GM12878 (cell line): ENCODE measurements at regions of chr19 and their contacts with region 1.

Region 1: GRCh38 chr19:35710784-35711723 is 6.7 kb downstream of the ZBTB32 start:
- DNase-seq: peak; percentile 94
- ATAC-seq: peak; percentile 56
- H3K4me3 ChIP-seq: peak overlapping the region; percentile 43
- H3K27ac ChIP-seq: peak overlapping the region; percentile 95
- H3K4me1 ChIP-seq: peaks cover 43% of the 10 kb centered on the region
- H3K27me3 ChIP-seq: no peaks in the 10 kb centered on the region
- CTCF ChIP-seq: no peak
- EP300 ChIP-seq: peak; percentile 70 to 92
- POLR2A ChIP-seq: peak; percentile 69
- RAD21 ChIP-seq: no peak

Region 2: GRCh38 chr19:35666246-35666913 is 44.7 kb before region 1 on chr19 and contains the start of gene UPK1A:
- CTCF ChIA-PET with region 1: no interaction called
- POLR2A ChIA-PET with region 1: no interaction called
- RAD21 ChIA-PET with region 1: no interaction called
- SMC1A ChIA-PET with region 1: no interaction called
- in situ Hi-C with region 1: no loop called
- intact Hi-C with region 1: no loop called
- DNase-seq: no peak
- ATAC-seq: no peak
- H3K4me3 ChIP-seq: no peak within 1 kb of the TSS
- H3K27ac ChIP-seq: no peak within 1 kb of the TSS
- H3K4me1 ChIP-seq: no peaks in the 10 kb centered on the region
- H3K27me3 ChIP-seq: no peaks in the 10 kb centered on the region
- CTCF ChIP-seq: no peak
- EP300 ChIP-seq: no peak
- POLR2A ChIP-seq: peak; percentile 15; the same call in 1 of the 2 replicates
- RAD21 ChIP-seq: no peak
- polyA plus RNA-seq, gene UPK1A: 0.26 TPM in 1 of 2 experiments, not detected in the other

Region 3: DNA sequence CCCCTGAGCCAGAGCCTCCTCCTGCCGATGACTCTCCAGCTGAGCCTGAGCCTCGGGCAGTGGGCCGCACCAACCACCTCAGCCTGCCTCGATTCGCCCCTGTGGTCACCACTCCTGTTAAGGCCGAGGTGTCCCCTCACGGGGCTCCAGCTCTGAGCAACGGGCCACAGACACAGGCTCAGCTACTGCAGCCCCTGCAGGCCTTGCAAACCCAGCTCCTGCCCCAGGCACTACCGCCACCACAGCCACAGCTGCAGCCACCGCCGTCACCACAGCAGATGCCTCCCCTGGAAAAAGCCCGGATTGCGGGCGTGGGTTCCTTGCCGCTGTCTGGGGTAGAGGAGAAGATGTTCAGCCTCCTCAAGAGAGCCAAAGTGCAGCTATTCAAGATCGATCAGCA is 10.3 kb after region 1 on chr19:
- CTCF ChIA-PET with region 1: no interaction called
- POLR2A ChIA-PET with region 1: no interaction called
- RAD21 ChIA-PET with region 1: no interaction called
- SMC1A ChIA-PET with region 1: no interaction called
- in situ Hi-C with region 1: no loop called
- intact Hi-C with region 1: no loop called
- DNase-seq: no peak
- ATAC-seq: no peak
- H3K4me3 ChIP-seq: no peak overlapping the region
- H3K27ac ChIP-seq: no peak overlapping the region
- H3K4me1 ChIP-seq: peaks cover 10% of the 10 kb centered on the region
- H3K27me3 ChIP-seq: no peaks in the 10 kb centered on the region
- CTCF ChIP-seq: no peak
- EP300 ChIP-seq: no peak
- POLR2A ChIP-seq: peak; percentile 52
- RAD21 ChIP-seq: no peak

Region 4: DNA sequence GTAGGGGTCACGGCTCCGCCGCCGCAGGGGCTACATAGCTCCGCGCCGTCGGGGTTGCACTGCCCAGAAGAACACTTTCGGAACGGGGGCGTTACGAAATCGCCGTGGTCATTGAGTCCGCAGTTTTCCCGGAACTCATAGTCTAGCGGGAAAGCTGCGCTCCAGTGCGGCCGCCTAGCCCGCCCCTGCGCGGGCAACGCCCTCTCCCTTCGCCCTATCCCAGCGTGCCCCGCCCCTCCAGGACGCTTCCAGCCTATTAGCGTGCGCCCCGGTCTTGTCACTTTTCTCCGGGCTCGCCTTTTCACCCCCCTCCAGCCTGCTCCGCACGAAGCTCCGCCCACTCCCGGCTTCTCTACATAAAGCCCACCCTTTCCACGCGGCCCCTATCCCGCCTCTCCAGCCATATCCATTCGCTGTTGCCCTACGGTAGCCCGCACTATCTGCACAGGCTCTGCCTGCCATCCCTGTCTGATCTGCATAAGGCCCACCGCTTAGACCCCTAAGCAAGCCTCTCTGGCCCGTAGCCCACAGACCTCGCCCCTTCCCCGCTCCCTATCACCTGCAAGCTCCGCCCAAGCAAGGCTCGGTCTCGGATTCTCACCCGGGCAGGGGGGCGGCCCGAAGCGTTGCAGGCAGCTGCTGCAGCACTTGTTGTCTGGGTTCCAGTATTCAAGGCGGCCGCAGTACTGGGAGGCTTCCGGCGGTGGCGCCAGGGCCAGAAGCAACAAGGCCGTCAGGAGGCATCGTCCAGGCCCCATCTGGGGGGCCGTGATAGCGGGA is 29.6 kb after region 1 on chr19:
- CTCF ChIA-PET with region 1: interaction called, 16 read pairs
- POLR2A ChIA-PET with region 1: interaction called, 91 read pairs
- RAD21 ChIA-PET with region 1: interaction called, 17 read pairs
- SMC1A ChIA-PET with region 1: interaction called, 8 read pairs
- in situ Hi-C with region 1: no loop called
- intact Hi-C with region 1: loop called (anchors 2 kb)
- DNase-seq: peak; percentile 86
- ATAC-seq: peak; percentile 78
- H3K4me3 ChIP-seq: peak overlapping the region; percentile 83
- H3K27ac ChIP-seq: peak overlapping the region; percentile 99
- H3K4me1 ChIP-seq: peaks cover 26% of the 10 kb centered on the region
- H3K27me3 ChIP-seq: no peaks in the 10 kb centered on the region
- CTCF ChIP-seq: peak in 2 of 3 experiments; percentile 24 to 30; a peak in 4 of 6 replicates
- EP300 ChIP-seq: no peak
- POLR2A ChIP-seq: peak; percentile 84
- RAD21 ChIP-seq: peak; percentile 7; the same call in 1 of the 2 replicates

Region 5: GRCh38 chr19:35748106-35749020 is 37.3 kb after region 1 on chr19 and contains the start of gene LIN37:
- CTCF ChIA-PET with region 1: interaction called, 16 read pairs
- POLR2A ChIA-PET with region 1: interaction called, 91 read pairs
- RAD21 ChIA-PET with region 1: interaction called, 13 read pairs
- SMC1A ChIA-PET with region 1: interaction called, 8 read pairs
- in situ Hi-C with region 1: no loop called
- intact Hi-C with region 1: no loop called
- DNase-seq: peak; percentile 99
- ATAC-seq: peak; percentile 85
- H3K4me3 ChIP-seq: peak within 1 kb of the TSS; percentile 81
- H3K27ac ChIP-seq: peak within 1 kb of the TSS; percentile 59
- H3K4me1 ChIP-seq: peaks cover 19% of the 10 kb centered on the region
- H3K27me3 ChIP-seq: no peaks in the 10 kb centered on the region
- CTCF ChIP-seq: no peak
- EP300 ChIP-seq: no peak
- POLR2A ChIP-seq: peak; percentile 55
- RAD21 ChIP-seq: no peak
- polyA plus RNA-seq, gene LIN37: 0.69 to 3.3 TPM

Region 6: GRCh38 chr19:35899547-35900214 is 188.6 kb after region 1 on chr19:
- CTCF ChIA-PET with region 1: no interaction called
- POLR2A ChIA-PET with region 1: interaction called, 4 read pairs
- RAD21 ChIA-PET with region 1: interaction called, 4 read pairs
- SMC1A ChIA-PET with region 1: no interaction called
- in situ Hi-C with region 1: no loop called
- intact Hi-C with region 1: loop called (anchors 5 kb)
- DNase-seq: peak; percentile 78
- ATAC-seq: peak; percentile 69
- H3K4me3 ChIP-seq: peak overlapping the region; percentile 96
- H3K27ac ChIP-seq: peak overlapping the region; percentile 96
- H3K4me1 ChIP-seq: peaks cover 37% of the 10 kb centered on the region
- H3K27me3 ChIP-seq: no peaks in the 10 kb centered on the region
- CTCF ChIP-seq: no peak
- EP300 ChIP-seq: peak; percentile 54 to 58; a peak in 2 of 4 replicates
- POLR2A ChIP-seq: peak; percentile 38; the same call in 1 of the 2 replicates
- RAD21 ChIP-seq: no peak

Region 7: GRCh38 chr19:35915443-35915842 is 204.4 kb after region 1 on chr19:
- CTCF ChIA-PET with region 1: no interaction called
- POLR2A ChIA-PET with region 1: interaction called, 10 read pairs
- RAD21 ChIA-PET with region 1: interaction called, 3 read pairs
- SMC1A ChIA-PET with region 1: interaction called, 6 read pairs
- in situ Hi-C with region 1: no loop called
- intact Hi-C with region 1: no loop called
- DNase-seq: no peak
- ATAC-seq: peak; percentile 67
- H3K4me3 ChIP-seq: no peak overlapping the region
- H3K27ac ChIP-seq: no peak overlapping the region; the same call in 1 of the 2 replicates
- H3K4me1 ChIP-seq: peaks cover 45% of the 10 kb centered on the region
- H3K27me3 ChIP-seq: no peaks in the 10 kb centered on the region
- CTCF ChIP-seq: no peak
- EP300 ChIP-seq: no peak; a peak in 1 of 4 replicates
- POLR2A ChIP-seq: no peak
- RAD21 ChIP-seq: no peak